H1 (cell line): ENCODE measurements at regions of chr20 and their contacts with region 1.

Region 1: DNA sequence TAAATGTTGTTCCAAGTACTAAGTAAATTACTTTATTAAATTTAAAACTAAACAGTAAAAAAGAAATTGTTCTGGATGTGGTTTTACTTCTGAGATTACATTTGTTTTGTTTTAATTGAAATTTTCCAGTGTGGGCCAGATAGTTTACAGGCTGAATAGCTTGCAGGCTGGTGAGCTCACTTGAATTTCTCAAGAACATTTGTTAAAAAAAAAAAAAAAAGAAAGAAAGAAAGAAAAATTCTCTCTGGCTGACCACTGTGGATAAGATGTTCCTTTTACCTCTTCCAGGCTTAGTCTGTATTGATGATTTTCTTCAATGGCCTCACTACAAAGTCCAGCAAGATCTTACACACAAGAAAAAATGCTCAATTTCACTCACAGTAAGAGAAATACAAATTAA is 85.4 kb downstream of the PLCG1 start:
- DNase-seq: no peak
- H3K4me3 ChIP-seq: no peak overlapping the region
- H3K27ac ChIP-seq: no peak overlapping the region
- H3K4me1 ChIP-seq: no peaks in the 10 kb centered on the region
- H3K27me3 ChIP-seq: no peaks in the 10 kb centered on the region
- CTCF ChIP-seq: no peak
- EP300 ChIP-seq: no peak
- POLR2A ChIP-seq: no peak
- RAD21 ChIP-seq: no peak

Region 2: DNA sequence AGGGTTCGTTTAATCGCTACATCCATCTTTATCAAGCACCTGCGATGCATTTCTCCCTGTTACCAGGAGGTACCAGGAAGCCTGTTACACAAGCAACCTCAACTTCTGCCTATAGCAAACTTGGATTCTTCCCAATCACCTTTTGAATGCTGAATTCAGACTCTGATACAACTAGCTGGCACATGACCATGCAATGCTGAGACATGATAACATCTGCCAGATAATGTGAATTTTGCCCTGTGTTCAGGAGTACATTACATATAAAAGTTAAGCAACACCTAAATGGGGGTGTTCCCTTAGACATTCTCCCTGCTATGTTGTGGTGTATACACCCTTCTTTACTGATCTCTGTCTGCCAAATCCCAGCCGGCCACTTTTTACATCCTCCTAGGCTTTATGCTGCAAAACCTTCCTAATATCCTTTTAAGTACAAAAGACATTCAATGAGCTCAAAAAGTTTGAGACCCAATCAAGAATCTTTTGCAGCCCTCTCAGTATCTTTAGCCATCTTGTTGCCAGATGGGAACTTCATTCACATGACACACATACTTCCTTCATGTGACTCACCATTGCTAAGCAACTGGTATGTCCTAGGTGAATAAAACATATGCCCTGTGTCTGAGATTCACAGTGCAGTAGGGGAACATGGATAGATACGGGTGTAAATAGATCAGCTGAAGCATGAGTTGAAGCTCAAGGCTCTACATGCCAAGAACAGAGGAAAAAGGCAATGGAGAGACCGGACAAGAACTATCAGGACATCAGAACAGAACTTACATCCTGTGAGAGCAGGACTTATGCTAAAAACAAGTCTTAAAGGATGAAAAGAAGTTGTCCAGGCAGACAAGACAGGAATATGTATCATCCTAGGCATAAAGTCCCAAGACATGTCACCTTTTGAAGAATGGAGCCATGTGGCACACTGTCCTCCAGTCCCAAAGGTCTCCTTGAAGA is 10.5 kb after region 1 on chr20:
- CTCF ChIA-PET with region 1: interaction called, 15 read pairs
- POLR2A ChIA-PET with region 1: no interaction called
- DNase-seq: no peak
- H3K4me3 ChIP-seq: no peak overlapping the region
- H3K27ac ChIP-seq: no peak overlapping the region
- H3K4me1 ChIP-seq: no peaks in the 10 kb centered on the region
- H3K27me3 ChIP-seq: no peaks in the 10 kb centered on the region
- CTCF ChIP-seq: no peak
- EP300 ChIP-seq: no peak
- POLR2A ChIP-seq: no peak
- RAD21 ChIP-seq: no peak